ENCODE measurements at regions of chr6 and their contacts with region 1.

Region 1: DNA sequence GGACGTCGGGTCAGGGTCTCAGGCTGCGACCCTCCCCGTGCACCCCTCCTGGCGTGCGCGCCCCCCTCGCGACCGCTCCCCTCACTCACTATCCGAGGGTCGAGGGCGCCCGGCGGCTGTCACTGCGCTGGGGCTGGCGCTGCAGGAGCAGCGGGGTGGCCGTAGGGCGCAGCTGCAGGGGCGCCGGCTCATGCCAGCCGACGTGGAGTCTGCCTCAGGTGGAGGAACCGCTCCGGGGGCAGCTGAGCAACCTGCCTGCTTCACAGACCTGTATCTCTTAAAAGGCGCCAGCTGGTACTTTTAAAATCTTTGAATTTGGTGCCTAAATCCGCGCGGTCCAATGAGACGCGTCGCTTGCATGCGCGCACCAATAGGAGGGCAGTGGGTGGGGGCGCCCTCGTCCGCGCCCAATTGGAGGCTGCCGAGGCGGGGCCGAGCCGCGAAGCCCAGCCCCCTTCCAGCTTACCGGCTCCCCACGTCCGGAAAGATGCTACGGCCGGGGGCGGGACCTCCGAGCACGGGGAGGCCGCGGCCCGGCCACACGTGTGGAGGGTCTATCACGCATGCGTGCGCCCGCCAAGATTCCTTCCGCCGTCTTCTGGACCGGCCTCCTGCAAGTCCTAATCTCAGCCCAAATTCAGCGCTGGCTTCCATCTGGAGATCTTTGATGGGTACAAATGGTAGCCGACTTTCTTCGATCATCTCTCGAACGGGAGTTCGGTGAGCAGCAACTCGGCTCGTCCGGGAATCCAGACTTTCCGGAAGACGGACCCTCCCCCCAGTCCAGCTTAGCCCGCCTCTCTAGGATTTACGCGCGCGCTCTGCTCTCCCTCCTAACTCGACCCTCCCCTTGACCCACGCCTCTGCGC is at the start of gene FBXO5:
- DNase-seq: peak; percentile 98
- ATAC-seq: peak; percentile 97
- total RNA-seq, gene FBXO5: 2.7 to 3.1 TPM

Region 2: DNA sequence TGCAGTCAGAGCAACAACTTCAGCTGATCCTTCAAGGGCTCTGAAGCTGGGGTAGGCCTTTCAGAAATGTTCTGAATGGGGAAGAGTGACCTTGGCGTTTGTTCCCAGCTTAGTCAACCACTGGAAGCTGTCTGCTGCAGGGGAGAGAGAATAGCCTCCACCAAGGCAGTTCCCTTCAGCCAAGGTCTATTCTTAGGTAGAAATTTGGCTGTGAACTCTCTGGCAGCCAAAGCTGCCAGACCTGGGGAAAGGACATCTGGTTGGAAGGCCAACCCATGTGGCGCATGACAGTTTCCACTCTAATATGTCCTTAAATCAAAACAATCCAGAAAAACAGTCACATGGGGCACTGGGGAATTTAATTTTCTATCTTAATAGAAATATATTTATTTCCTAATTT is 60.3 kb before region 1 on chr6:
- intact Hi-C with region 1: no loop called
- DNase-seq: no peak
- ATAC-seq: peak; percentile 56 to 82

Region 3: GRCh38 chr6:153002607-153003365 is 19.8 kb after region 1 on chr6 and contains the start of gene MTRF1L:
- intact Hi-C with region 1: loop called in 1 of 2 experiments (anchors 2 kb)
- DNase-seq: peak; percentile 96
- ATAC-seq: peak; percentile 98 to 99
- total RNA-seq, gene MTRF1L: 28.3 to 36.1 TPM

Region 4: GRCh38 chr6:153192943-153193885 is 210.2 kb after region 1 on chr6:
- intact Hi-C with region 1: no loop called
- DNase-seq: no peak
- ATAC-seq: no peak